Activated B cell treated with CpG ODN at 0.5 μM for 24 hours (primary cell): ENCODE measurements at regions of chr16 and their contacts with region 1.

Region 1: GRCh38 chr16:46673320-46674013 is 15.5 kb downstream of the VPS35 start:
- DNase-seq: no peak
- ATAC-seq: peak; percentile 92
- H3K4me3 Mint-ChIP-seq: no peak overlapping the region
- H3K27ac Mint-ChIP-seq: no peak overlapping the region
- H3K4me1 Mint-ChIP-seq: no peaks in the 10 kb centered on the region
- H3K27me3 Mint-ChIP-seq: no peaks in the 10 kb centered on the region
- CTCF ChIP-seq: peak; percentile 37

Region 2: GRCh38 chr16:46658925-46659324 is 14.5 kb before region 1 on chr16:
- CTCF ChIA-PET with region 1: interaction called, 10 read pairs
- POLR2A ChIA-PET with region 1: interaction called, 4 read pairs
- intact Hi-C with region 1: no loop called
- DNase-seq: peak; percentile 26
- ATAC-seq: peak; percentile 95
- H3K4me3 Mint-ChIP-seq: peak overlapping the region; percentile 20
- H3K27ac Mint-ChIP-seq: peak overlapping the region; percentile 80
- H3K4me1 Mint-ChIP-seq: peaks cover 21% of the 10 kb centered on the region
- H3K27me3 Mint-ChIP-seq: no peaks in the 10 kb centered on the region
- CTCF ChIP-seq: no peak

Region 3: GRCh38 chr16:46743238-46743719 is 69.8 kb after region 1 on chr16:
- CTCF ChIA-PET with region 1: no interaction called
- POLR2A ChIA-PET with region 1: no interaction called
- intact Hi-C with region 1: no loop called
- DNase-seq: peak; percentile 38
- ATAC-seq: peak; percentile 82
- H3K4me3 Mint-ChIP-seq: peak overlapping the region; percentile 86
- H3K27ac Mint-ChIP-seq: peak overlapping the region; percentile 97
- H3K4me1 Mint-ChIP-seq: peaks cover 24% of the 10 kb centered on the region
- H3K27me3 Mint-ChIP-seq: no peaks in the 10 kb centered on the region
- CTCF ChIP-seq: no peak

Region 4: DNA sequence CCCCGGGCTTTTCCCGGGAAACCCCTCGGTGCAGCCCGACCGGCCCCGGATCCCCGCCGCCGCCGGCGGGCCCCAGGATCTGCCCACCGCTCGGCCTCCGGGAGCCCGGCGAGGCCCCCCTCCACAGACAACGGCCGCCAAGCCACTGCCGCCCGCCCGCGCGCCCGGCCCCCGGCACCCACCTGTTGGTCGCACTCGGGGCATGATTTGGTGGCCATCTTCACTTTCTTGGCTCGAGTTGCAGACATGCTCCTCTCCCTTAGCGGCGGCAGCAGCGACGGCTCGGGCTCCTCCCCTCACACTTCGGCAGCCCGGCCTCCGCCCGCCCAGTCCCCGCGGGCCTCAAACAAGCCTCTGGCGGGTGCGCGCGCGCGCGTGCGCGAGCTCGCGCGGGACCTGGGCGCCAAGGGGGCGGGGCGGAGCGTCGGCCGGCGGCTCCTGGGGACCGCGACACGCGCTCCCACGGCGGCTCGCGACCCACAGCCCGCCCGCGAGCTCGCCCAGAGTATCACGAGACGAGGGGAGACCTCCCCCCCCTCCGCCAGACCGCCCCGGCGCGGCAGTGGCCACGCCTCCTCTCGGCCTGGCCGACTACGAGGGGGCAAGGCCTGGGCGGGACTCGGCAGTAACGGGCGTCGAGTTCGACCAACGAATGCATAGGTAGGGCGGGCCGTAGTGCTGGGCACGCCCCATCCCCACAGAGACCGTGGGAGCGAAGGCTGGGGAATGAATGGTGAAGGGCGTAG is 157.6 kb after region 1 on chr16 and contains the start of gene C16orf87:
- CTCF ChIA-PET with region 1: interaction called, 10 read pairs
- POLR2A ChIA-PET with region 1: interaction called, 8 read pairs
- intact Hi-C with region 1: no loop called
- DNase-seq: peak; percentile 90
- ATAC-seq: peak; percentile 92
- H3K4me3 Mint-ChIP-seq: peak within 1 kb of the TSS; percentile 99
- H3K27ac Mint-ChIP-seq: peak within 1 kb of the TSS; percentile 95
- H3K4me1 Mint-ChIP-seq: peaks cover 68% of the 10 kb centered on the region
- H3K27me3 Mint-ChIP-seq: no peaks in the 10 kb centered on the region
- CTCF ChIP-seq: no peak
- total RNA-seq, gene C16orf87: 15.6 and 16.6 TPM in 2 replicates

Region 5: GRCh38 chr16:46908540-46909372 is 235.3 kb after region 1 on chr16:
- CTCF ChIA-PET with region 1: interaction called, 24 read pairs
- POLR2A ChIA-PET with region 1: interaction called, 4 read pairs
- intact Hi-C with region 1: loop called (anchors 1 kb)
- DNase-seq: peak; percentile 33
- ATAC-seq: peak; percentile 30
- H3K4me3 Mint-ChIP-seq: no peak overlapping the region
- H3K27ac Mint-ChIP-seq: no peak overlapping the region
- H3K4me1 Mint-ChIP-seq: peaks cover 56% of the 10 kb centered on the region
- H3K27me3 Mint-ChIP-seq: no peaks in the 10 kb centered on the region
- CTCF ChIP-seq: peak; percentile 77

Region 6: DNA sequence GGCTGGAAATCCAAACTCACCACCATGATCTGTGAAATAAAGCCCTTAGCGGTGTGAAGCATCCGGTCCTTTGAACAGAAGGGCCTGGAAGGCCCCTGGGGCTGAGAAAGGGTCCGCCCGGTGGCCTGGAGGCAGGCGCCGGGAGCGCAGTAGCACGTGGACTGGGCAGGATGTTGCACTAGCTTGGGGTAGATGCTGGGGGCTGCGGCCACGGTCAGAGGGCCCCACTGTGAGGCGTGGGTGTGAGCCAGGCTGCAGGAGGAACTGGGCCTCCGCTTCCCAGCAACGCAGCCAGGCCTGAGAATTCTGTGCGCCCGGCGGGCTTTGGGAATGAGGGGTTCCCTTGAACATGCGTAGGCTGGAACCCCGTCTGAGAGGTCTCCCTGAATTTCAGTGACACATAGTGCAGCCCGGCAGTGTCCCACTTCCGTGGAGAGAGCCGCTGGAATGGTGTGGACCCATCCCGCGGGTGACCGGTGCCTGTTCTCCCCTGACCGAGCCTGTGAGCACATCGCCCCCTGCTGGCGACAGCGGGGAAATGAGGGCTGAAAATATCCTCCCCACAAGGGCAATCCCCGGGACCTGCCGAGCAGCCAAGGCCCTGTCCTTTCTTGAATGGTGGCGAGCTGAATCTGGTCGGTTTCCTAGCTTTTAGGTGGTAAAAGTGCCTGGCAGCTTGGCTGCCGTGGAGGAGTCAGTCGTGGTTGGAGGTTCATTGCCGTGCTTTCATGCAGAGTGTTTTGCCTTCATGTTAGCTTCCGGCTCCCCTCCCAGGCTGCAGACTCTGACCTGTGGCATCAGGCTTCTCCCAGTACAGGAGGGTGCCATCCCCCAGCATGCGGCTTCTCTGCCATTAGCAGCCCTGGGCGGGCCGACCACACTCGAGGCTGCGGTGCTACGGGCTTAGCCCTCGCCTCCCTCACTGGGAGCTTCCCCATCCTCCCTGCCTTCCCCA is 256.2 kb after region 1 on chr16:
- CTCF ChIA-PET with region 1: interaction called, 19 read pairs
- POLR2A ChIA-PET with region 1: no interaction called
- intact Hi-C with region 1: loop called (anchors 1 kb)
- DNase-seq: peak; percentile 69
- ATAC-seq: peak; percentile 76
- H3K4me3 Mint-ChIP-seq: no peak overlapping the region
- H3K27ac Mint-ChIP-seq: no peak overlapping the region
- H3K4me1 Mint-ChIP-seq: peaks cover 12% of the 10 kb centered on the region
- H3K27me3 Mint-ChIP-seq: no peaks in the 10 kb centered on the region
- CTCF ChIP-seq: peak; percentile 59